ENCODE measurements at regions of chr7 and their contacts with region 1.

Region 1: DNA sequence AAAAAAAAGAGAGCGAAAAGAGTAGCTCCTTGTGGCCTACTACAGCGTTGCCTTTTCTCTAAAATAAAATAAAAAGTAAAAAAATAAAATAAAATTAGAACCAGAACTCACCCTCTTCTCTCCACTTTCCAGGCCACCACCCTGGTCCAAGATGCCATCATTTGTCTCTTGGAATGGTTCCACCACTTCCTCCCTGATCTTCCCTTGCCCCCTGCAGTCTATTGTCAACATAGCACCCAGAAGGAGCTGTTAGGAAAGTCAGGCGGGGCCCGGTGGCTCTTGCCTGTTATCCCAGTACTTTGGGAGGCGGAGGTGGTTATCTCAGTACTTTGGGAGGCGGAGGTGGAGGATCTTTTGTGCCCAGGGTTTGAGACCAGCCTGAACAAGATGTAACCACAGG is 7.6 kb upstream of the GRID2IP start:
- DNase-seq: no peak
- ATAC-seq: peak; percentile 33
- H3K4me3 Mint-ChIP-seq: no peak overlapping the region
- H3K27ac Mint-ChIP-seq: no peak overlapping the region
- H3K4me1 Mint-ChIP-seq: peaks cover 6% of the 10 kb centered on the region
- H3K27me3 Mint-ChIP-seq: no peaks in the 10 kb centered on the region

Region 2: DNA sequence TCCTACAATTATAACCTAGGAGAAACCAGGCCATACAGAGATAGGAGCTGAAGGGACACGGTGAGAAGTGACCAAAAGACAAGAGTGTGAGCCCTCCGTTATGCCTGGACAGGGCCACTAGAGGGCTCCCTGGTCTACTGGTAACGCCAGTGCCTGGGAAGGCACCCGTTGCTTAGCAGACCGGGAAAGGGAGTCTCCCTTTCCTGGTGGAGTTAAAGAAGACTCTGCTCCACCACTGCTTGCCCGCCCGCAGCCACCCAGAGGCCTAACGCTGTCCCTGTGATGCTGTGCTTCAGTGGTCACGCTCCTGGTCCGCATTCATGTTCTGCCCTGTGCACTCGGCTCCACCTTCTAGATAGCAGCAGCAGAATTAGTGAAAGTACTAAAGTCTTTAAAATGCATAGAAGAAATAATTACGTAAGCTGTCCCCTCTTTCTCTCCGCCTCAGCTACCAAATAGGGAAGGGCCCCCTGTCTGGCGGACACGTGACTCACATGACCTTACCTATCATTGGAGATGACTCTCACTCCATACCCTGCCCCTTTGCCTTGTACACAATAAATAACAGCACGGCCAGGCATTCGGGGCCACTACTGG is 42.4 kb before region 1 on chr7:
- CTCF ChIA-PET with region 1: interaction called, 23 read pairs
- DNase-seq: peak; percentile 81
- ATAC-seq: peak; percentile 81
- H3K4me3 Mint-ChIP-seq: peak overlapping the region; percentile 70
- H3K27ac Mint-ChIP-seq: no peak overlapping the region
- H3K4me1 Mint-ChIP-seq: peaks cover 7% of the 10 kb centered on the region
- H3K27me3 Mint-ChIP-seq: peaks cover 5% of the 10 kb centered on the region

Measured in activated CD8-positive, alpha-beta memory T cell treated with anti-CD3 and anti-CD28 coated beads, Interleukin-2, amount 10 ng/mL, durations not matched to agents 7 days and 5 days (primary cell).